ENCODE measurements at regions of chr18 and their contacts with region 1.

Region 1: GRCh38 chr18:50356036-50356945 is 18.6 kb upstream of the SKA1 start:
- DNase-seq: peak; percentile 55
- H3K4me3 ChIP-seq: no peak overlapping the region
- H3K27ac ChIP-seq: no peak overlapping the region
- H3K4me1 ChIP-seq: peaks cover 12% of the 10 kb centered on the region
- H3K27me3 ChIP-seq: no peaks in the 10 kb centered on the region
- CTCF ChIP-seq: peak in 1 of 2 donors; percentile 6

Region 2: DNA sequence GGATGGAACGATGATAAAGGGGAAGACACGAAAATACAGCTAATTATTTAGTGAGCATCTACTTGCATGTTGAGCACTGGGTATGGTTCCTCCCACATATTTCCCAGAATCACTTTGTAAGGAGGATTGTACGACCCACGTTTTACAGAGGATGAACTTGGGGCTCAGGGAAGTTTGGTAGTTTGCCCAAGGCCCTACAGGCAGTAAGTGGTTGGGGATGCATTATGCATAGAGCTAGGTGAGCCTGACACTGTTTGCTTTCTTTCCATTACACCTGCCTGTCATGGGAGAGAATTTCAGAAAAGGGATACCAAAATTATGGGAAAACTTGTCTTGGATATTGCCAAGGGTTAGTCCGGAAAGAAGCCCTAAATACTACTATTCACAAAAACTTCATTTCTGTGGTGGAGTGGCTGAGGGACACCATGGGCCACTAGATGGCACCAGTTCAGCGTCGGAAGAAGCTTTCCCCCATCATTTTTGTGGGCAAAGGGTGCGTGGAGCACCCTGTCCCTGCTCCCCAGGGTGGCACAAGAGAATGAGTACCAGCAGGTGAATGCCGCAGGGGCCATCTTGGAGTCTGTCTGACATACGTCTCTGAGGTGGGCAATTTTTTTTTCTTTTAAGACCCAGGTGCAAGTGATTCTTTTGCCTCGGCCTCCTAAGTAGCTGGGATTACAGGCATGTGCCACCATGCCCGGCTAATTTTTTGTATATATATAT is 845.7 kb before region 1 on chr18:
- CTCF ChIA-PET with region 1: interaction called, 11 read pairs
- dilution Hi-C with region 1: no loop called
- in situ Hi-C with region 1: no loop called
- intact Hi-C with region 1: no loop called
- DNase-seq: peak; percentile 46
- H3K4me3 ChIP-seq: no peak overlapping the region
- H3K27ac ChIP-seq: no peak overlapping the region
- H3K4me1 ChIP-seq: no peaks in the 10 kb centered on the region
- H3K27me3 ChIP-seq: no peaks in the 10 kb centered on the region
- CTCF ChIP-seq: peak; percentile 92 to 93

Region 3: DNA sequence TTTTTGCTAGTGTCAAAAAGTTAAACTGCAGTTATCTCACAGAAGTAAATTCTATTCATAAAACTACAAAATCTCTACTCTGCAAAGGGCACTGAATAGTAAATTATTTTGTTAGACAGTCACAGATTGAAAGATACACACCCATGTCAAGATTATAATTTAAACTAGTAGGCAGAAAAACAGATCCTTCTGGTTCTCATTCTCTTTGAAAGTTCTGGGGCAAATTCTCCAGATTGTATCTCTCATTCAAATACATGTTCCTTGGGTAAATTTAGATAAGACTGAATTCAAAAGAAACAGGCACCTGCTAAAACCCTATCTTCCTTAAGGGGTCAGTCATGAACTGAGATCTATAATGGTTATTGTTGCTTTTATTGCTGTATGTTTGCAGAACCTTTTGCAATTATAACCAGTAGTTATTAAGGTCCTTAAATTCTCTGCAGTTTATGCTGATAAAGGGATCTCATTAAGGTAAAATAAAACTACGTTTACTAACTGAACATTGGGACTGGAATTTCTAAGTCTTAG is 245.0 kb before region 1 on chr18:
- CTCF ChIA-PET with region 1: interaction called, 4 read pairs
- dilution Hi-C with region 1: no loop called
- in situ Hi-C with region 1: no loop called
- intact Hi-C with region 1: loop called (anchors 5 kb)
- DNase-seq: no peak
- H3K4me3 ChIP-seq: no peak overlapping the region
- H3K27ac ChIP-seq: no peak overlapping the region
- H3K4me1 ChIP-seq: no peaks in the 10 kb centered on the region
- H3K27me3 ChIP-seq: no peaks in the 10 kb centered on the region
- CTCF ChIP-seq: peak; percentile 30 to 50

Region 4: GRCh38 chr18:50218432-50219197 is 137.7 kb before region 1 on chr18:
- CTCF ChIA-PET with region 1: interaction called, 13 read pairs
- dilution Hi-C with region 1: no loop called
- in situ Hi-C with region 1: loop called (anchors 5 to 10 kb)
- intact Hi-C with region 1: loop called (anchors 1 kb)
- DNase-seq: peak; percentile 33
- H3K4me3 ChIP-seq: no peak overlapping the region
- H3K27ac ChIP-seq: no peak overlapping the region
- H3K4me1 ChIP-seq: no peaks in the 10 kb centered on the region
- H3K27me3 ChIP-seq: no peaks in the 10 kb centered on the region
- CTCF ChIP-seq: peak; percentile 38 to 70

Region 5: GRCh38 chr18:50281295-50281971 is 74.9 kb before region 1 on chr18 and contains the start of gene MBD1:
- CTCF ChIA-PET with region 1: no interaction called
- dilution Hi-C with region 1: no loop called
- in situ Hi-C with region 1: no loop called
- intact Hi-C with region 1: loop called (anchors 1 kb)
- DNase-seq: peak; percentile 98
- H3K4me3 ChIP-seq: peak within 1 kb of the TSS; percentile 81 to 100 (median 98)
- H3K27ac ChIP-seq: peak within 1 kb of the TSS; percentile 86
- H3K4me1 ChIP-seq: peaks cover 57% of the 10 kb centered on the region
- H3K27me3 ChIP-seq: no peaks in the 10 kb centered on the region
- CTCF ChIP-seq: peak in 1 of 2 donors; percentile 26
- total RNA-seq, gene MBD1: 102 to 196 TPM

Region 6: GRCh38 chr18:50369672-50370071 is 13.4 kb after region 1 on chr18:
- CTCF ChIA-PET with region 1: no interaction called
- dilution Hi-C with region 1: no loop called
- in situ Hi-C with region 1: no loop called
- intact Hi-C with region 1: no loop called
- DNase-seq: no peak
- H3K4me3 ChIP-seq: no peak overlapping the region
- H3K27ac ChIP-seq: no peak overlapping the region
- H3K4me1 ChIP-seq: peaks cover 5% of the 10 kb centered on the region
- H3K27me3 ChIP-seq: no peaks in the 10 kb centered on the region
- CTCF ChIP-seq: no peak

Region 7: GRCh38 chr18:50429207-50429948 is 73.1 kb after region 1 on chr18:
- CTCF ChIA-PET with region 1: interaction called, 5 read pairs
- dilution Hi-C with region 1: no loop called
- in situ Hi-C with region 1: no loop called
- intact Hi-C with region 1: loop called (anchors 5 kb)
- DNase-seq: no peak
- H3K4me3 ChIP-seq: no peak overlapping the region
- H3K27ac ChIP-seq: no peak overlapping the region
- H3K4me1 ChIP-seq: no peaks in the 10 kb centered on the region
- H3K27me3 ChIP-seq: no peaks in the 10 kb centered on the region
- CTCF ChIP-seq: peak; percentile 31 to 43

Measured in mammary epithelial cell (primary cell).